Colonic mucosa (tissue), 4 donors: ENCODE measurements at regions of chr11 and their contacts with region 1.

Region 1: GRCh38 chr11:46826310-46827044 is 19.6 kb downstream of the CKAP5 start:
- DNase-seq: peak; percentile 83
- H3K4me3 ChIP-seq: peak overlapping the region; percentile 51
- H3K27ac ChIP-seq: peak overlapping the region; percentile 21
- H3K4me1 ChIP-seq: peaks cover 3% of the 10 kb centered on the region
- H3K27me3 ChIP-seq: no peaks in the 10 kb centered on the region
- CTCF ChIP-seq: no peak

Region 2: DNA sequence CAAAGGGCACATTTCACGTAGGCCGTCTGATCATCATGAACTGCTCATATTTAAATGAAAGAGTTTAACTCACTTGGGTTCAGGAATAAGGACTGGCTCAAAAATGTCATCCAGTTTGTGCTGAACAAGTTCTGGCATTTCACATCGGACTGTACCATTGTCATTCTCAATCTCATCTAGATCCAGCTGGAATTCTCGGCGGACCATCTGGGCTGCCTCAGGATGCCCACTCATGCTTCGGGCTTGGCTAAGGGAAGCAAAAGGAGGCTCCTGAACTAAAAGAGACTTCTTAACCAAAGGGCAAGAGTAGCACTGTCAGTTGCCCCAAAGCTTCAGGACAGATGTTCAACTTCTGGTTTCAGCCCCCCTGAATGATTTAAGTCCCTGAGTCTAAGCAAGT is 67.3 kb before region 1 on chr11:
- intact Hi-C with region 1: no loop called
- DNase-seq: no peak
- H3K4me3 ChIP-seq: no peak overlapping the region
- H3K27ac ChIP-seq: no peak overlapping the region
- H3K4me1 ChIP-seq: no peaks in the 10 kb centered on the region
- H3K27me3 ChIP-seq: no peaks in the 10 kb centered on the region
- CTCF ChIP-seq: no peak

Region 3: DNA sequence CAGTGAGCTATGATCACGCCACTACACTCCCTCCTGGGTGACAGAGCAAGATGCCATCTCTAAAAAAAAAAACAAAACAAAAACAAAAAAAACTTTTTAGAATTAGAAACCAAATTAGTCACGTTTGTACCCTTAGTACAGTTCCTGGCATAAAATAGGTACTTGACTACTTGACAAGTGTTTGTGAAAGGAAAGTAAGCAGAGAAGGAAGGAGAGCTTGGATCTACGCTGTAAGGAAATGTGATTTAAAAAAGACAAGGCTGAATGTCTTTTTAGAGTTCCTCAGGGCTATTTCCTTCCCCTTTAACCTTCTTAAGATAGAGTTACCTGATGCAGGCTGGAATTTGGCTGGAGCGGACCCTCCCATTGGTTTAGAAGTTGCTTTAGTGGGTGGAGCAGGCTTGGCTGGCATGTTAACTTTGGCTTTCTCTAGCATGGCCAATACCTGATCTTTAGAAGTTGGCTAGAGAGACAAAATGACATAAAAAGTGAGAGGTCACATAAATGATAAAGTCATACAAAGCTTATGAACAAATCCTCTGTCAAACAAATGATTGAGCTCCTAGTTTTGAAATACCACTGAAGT is 56.7 kb before region 1 on chr11:
- intact Hi-C with region 1: no loop called
- DNase-seq: no peak
- H3K4me3 ChIP-seq: no peak overlapping the region
- H3K27ac ChIP-seq: no peak overlapping the region
- H3K4me1 ChIP-seq: no peaks in the 10 kb centered on the region
- H3K27me3 ChIP-seq: no peaks in the 10 kb centered on the region
- CTCF ChIP-seq: no peak

Region 4: DNA sequence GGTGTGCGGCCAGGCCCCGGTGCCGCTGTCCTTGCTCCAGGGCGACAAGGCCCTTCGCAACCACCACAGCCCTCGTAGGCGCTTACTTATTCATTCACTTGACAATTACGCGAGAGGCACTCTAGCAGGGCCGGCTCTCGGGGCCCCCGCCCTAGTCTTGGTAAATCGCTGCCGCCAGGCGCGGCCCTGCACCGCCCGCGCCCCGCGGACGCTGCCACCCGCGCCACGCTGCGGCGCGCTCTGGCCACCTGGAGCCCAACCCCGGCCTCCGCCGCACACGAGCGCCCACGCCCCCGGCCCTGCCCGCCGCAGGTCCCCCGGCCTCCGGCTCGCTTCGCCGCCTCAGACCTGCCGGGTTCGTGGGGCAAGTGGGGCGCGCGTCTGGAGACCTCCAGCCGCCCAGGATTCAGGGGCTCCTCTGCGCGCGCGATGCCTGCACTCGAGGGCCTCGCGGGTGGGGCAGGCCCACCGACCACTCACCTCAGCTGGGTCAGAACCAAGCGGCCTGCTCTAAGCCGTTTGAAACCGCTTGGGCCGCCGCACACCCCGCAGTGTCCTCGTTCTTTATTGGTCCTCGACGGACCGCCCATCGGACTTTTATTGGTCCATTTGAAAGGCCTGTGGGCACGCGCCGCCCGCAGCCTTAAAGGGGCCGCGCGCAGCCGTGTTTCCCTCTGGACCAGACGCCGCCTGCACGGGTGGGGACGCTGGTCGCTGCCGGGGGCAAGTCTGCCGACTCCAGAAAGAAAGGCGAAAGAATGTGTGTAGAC is 19.4 kb after region 1 on chr11 and contains the start of gene CKAP5:
- intact Hi-C with region 1: loop called (anchors 1 kb)
- DNase-seq: peak; percentile 94
- H3K4me3 ChIP-seq: peak within 1 kb of the TSS; percentile 92
- H3K27ac ChIP-seq: peak within 1 kb of the TSS; percentile 78
- H3K4me1 ChIP-seq: peaks cover 8% of the 10 kb centered on the region
- H3K27me3 ChIP-seq: no peaks in the 10 kb centered on the region
- CTCF ChIP-seq: no peak
- total RNA-seq, gene CKAP5: 71.2 to 105 TPM

Region 5: GRCh38 chr11:47499614-47500013 is 673.1 kb after region 1 on chr11:
- intact Hi-C with region 1: no loop called
- DNase-seq: no peak
- H3K4me3 ChIP-seq: no peak overlapping the region
- H3K27ac ChIP-seq: peak overlapping the region; percentile 1
- H3K4me1 ChIP-seq: no peaks in the 10 kb centered on the region
- H3K27me3 ChIP-seq: no peaks in the 10 kb centered on the region
- CTCF ChIP-seq: no peak